GM12878 (cell line): ENCODE measurements at regions of chr1 and their contacts with region 1.

Region 1: GRCh38 chr1:214617843-214618242 is 14.8 kb downstream of the CENPF start:
- DNase-seq: no peak
- ATAC-seq: no peak
- H3K4me3 ChIP-seq: no peak overlapping the region
- H3K27ac ChIP-seq: no peak overlapping the region
- H3K4me1 ChIP-seq: no peaks in the 10 kb centered on the region
- H3K27me3 ChIP-seq: no peaks in the 10 kb centered on the region
- CTCF ChIP-seq: no peak
- EP300 ChIP-seq: no peak
- POLR2A ChIP-seq: no peak
- RAD21 ChIP-seq: no peak

Region 2: DNA sequence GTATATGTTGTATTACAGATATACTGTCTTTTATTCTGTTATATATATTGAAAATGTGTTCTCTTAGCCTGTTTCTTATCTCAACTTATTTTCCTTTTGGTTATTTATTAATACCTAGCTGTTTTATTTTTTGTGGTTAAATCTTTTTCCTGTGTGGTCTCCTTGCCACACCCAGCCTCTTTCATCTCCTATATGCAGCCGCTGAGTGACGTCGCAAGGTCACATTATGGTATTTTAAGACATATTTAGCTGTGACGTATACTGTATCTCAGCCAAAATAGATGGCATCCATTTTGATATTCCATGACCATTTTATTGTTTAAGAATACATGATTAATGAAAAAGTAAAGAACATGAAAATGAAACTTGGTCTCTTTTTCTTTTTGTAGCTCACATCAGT is 14.2 kb after region 1 on chr1:
- CTCF ChIA-PET with region 1: interaction called, 110 read pairs
- POLR2A ChIA-PET with region 1: no interaction called
- RAD21 ChIA-PET with region 1: interaction called, 3 read pairs
- SMC1A ChIA-PET with region 1: interaction called, 4 read pairs
- in situ Hi-C with region 1: no loop called
- intact Hi-C with region 1: no loop called
- DNase-seq: no peak
- ATAC-seq: peak; percentile 38; the same call in 2 of the 3 replicates
- H3K4me3 ChIP-seq: no peak overlapping the region
- H3K27ac ChIP-seq: no peak overlapping the region
- H3K4me1 ChIP-seq: no peaks in the 10 kb centered on the region
- H3K27me3 ChIP-seq: no peaks in the 10 kb centered on the region
- CTCF ChIP-seq: no peak
- EP300 ChIP-seq: no peak
- POLR2A ChIP-seq: no peak
- RAD21 ChIP-seq: no peak